ENCODE measurements at regions of chr14 and their contacts with region 1.

Region 1: DNA sequence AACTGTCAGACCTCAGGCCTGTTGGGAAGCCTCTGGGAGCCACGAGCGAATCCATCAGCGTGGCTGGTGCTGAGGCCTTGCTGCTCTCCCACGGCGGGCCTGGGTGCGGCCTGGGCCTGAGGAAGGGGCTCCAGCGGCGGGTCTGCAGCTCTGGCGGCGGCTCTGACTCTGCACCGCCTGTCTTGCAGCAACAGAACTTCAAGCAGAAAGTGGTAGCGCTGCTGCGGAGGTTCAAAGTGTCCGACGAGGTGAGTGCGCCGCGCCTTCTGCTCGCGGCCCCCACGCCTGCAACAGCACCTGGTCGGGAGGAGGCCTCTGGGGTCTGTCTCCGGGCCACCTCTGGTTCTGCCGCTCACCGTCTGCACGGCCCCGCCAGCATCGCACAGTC is 28.7 kb upstream of the TEX22 start:
- H3K4me3 ChIP-seq: no peak overlapping the region
- H3K27ac ChIP-seq: no peak overlapping the region
- H3K4me1 ChIP-seq: peaks cover 5% of the 10 kb centered on the region; the same call in 1 of the 2 replicates
- CTCF ChIP-seq: no peak

Region 2: DNA sequence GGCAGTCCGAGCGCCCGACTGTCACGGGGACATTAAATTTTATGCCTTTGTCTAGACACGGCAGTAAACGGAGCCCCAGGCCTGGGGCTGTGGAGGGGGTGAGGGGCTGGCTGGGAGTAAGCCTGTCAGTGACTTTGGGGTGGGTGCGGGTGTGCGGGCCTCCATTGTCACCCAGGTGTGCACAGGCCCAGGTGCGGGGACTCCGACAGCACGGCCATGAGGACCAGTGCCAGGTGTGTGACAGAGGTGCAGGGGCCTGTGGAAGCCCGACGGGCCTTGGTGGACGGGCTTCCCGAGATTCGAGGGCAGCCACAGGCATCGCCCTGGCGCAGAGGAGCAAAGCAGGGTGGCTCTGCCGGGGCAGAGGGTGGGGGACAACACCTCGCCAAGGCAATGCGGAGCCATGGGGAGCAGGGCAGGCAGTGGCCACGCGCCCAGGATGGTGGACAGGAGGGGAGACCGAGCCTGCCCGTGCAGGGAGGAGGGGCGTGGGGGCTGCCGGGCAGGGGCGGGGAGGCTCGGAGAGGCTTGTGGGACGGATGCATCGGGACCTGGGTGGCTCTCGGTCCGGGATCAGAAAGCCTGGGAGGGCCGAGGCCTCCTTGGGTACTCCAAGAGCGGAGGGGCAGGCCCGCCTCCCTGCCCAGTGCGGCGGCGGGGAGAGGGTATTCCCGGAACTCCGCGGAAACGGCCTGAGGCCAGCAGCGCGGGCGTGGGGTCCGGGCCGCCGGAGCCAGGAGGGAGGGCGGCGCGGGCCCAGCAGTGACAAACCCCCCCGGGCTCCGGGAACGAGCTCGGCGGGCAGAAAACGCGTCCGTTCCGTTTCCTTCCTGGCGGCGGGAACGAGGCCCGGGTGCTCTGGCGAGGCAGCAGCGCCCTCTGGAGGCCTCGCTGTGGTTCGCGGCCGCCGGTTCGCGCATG is 158.3 kb after region 1 on chr14:
- CTCF ChIA-PET with region 1: interaction called, 15 read pairs
- POLR2A ChIA-PET with region 1: no interaction called
- H3K4me3 ChIP-seq: peak overlapping the region; percentile 40
- H3K27ac ChIP-seq: peak overlapping the region; percentile 74; the same call in 1 of the 2 replicates
- H3K4me1 ChIP-seq: 0 out of 2 replicates have a peak, but pooled peaks cover 2% of the 10 kb centered on the region
- CTCF ChIP-seq: peak; percentile 92

Measured in HEK293 (cell line).